Right ventricle myocardium superior (tissue), 1 donor: ENCODE measurements at regions of chr2 and their contacts with region 1.

Region 1: GRCh38 chr2:138564586-138565241 is 63.1 kb downstream of the SPOPL start:
- DNase-seq: no peak
- ATAC-seq: no peak

Region 2: DNA sequence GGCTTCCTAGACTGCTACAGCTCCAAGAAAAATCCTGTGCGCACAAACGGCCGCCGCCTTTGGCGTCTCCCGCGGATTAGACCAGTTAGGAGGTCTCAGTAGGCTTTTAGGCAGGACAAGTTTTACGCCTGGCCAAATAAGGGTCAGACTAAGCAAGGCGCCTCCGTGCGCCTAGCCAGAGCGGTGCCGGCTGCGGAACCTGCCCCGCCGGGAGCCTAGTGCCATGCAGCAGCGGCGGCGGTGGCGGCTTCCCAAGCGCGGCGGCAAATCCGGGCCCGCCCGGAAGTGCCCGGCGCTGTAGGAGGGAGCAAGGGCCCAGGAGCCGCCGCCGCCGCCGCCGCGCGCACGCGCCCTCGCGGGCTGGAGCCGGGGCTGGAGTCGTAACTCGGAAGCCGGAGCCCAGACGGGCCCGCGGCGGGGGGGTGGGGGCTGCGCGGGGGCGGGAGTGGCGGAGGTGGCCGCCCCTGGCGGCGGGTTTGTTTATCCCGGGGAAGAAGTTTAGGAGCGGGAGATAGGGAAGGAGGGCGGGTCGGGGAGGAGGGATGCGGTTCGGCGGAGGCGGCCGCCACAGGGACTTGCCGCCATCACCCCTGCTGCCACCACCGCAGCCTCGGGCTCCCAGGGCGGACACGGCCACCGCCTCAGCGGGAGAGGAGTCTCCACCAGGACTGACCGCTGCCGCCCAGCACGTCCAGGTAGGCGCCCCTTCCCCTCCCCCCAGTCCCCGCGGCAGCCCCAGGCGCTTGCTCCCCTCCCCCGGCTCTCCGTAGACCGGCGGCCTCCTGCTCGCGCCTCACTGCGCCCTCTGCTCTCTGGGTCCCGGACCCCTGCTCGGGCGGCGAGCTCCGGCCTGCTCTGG is 63.1 kb before region 1 on chr2 and contains the start of gene SPOPL:
- intact Hi-C with region 1: loop called (anchors 10 kb)
- DNase-seq: peak; percentile 96
- ATAC-seq: peak; percentile 99
- total RNA-seq, gene SPOPL: 12.9 TPM